ENCODE measurements at regions of chr10 and their contacts with region 1.

Region 1: DNA sequence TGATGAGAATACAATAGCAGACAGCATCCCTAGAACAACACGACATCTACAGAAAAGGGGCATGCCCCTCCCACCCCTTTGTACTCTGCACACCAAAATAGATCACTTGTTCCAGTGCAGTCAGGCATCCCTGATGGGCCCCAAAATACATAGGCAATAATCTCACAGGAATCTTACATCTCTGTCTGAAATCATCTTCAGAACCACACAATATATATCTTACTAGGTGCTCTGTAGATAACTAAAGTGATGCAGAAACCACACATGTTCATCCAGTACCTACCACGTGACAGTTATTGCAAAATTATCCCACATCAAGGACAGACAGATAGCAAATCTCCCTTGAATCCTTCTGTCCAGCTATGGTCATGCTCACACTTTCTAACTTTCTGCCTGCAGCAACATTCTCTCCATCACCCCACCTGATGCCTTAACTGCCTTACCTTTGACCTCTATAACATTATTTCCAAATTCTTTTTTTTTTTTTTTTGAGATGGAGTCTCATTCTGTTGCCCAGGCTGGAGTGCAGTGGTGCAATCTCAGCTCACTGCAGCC is 30.7 kb downstream of the ST8SIA6 start:
- DNase-seq: no peak
- H3K4me3 ChIP-seq: no peak overlapping the region
- H3K4me3 Mint-ChIP-seq: no peak overlapping the region
- H3K27ac ChIP-seq: no peak overlapping the region
- H3K27ac Mint-ChIP-seq: peak overlapping the region in 5 of 8 donors; percentile 14 to 81 (median 51)
- H3K4me1 ChIP-seq: peaks cover 66% of the 10 kb centered on the region
- H3K4me1 Mint-ChIP-seq: peaks cover 46 to 56% (median 54%) of the 10 kb centered on the region in 3 donors
- H3K27me3 ChIP-seq: no peaks in the 10 kb centered on the region
- H3K27me3 Mint-ChIP-seq: no peaks in the 10 kb centered on the region

Region 2: DNA sequence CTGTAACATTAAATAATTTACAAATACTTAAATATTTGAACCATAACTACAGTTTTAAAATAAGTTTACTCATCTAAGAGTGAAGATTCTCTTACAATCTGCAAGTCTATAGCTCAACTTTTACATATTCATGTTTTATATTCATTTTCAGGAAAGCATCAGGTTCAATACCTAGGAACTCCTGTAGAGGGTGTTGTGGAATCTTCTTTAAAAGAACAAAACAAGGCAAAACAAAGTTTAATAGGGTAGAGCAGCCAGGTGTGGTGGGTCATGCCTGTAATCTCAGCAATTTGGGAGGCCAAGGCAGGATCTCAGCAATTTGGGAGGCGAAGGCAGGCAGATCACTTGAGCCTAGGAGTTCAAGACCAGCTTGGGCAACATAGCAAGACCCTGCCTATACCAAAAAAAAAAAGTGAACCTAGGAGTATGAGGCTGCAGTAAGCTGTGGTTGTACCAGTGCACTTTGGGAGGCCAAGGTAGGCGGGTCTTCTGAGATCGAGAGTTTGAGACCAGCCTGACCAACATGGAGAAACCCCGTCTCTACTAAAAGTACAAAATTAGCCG is 14.5 kb before region 1 on chr10:
- CTCF ChIA-PET with region 1: interaction called, 115 read pairs
- POLR2A ChIA-PET with region 1: interaction called, 6 read pairs
- DNase-seq: peak in 2 of 5 donors; percentile 28 to 41
- H3K4me3 ChIP-seq: no peak overlapping the region
- H3K4me3 Mint-ChIP-seq: no peak overlapping the region
- H3K27ac ChIP-seq: no peak overlapping the region
- H3K27ac Mint-ChIP-seq: peak overlapping the region in 2 of 8 donors; percentile 14 to 37
- H3K4me1 ChIP-seq: peaks cover 13% of the 10 kb centered on the region
- H3K4me1 Mint-ChIP-seq: peaks cover 6 to 15% (median 10%) of the 10 kb centered on the region in 3 donors
- H3K27me3 ChIP-seq: no peaks in the 10 kb centered on the region
- H3K27me3 Mint-ChIP-seq: no peaks in the 10 kb centered on the region

Measured in CD8-positive, alpha-beta memory T cell (primary cell).